GM18951 (cell line): ENCODE measurements at regions of chr6 and their contacts with region 1.

Region 1: DNA sequence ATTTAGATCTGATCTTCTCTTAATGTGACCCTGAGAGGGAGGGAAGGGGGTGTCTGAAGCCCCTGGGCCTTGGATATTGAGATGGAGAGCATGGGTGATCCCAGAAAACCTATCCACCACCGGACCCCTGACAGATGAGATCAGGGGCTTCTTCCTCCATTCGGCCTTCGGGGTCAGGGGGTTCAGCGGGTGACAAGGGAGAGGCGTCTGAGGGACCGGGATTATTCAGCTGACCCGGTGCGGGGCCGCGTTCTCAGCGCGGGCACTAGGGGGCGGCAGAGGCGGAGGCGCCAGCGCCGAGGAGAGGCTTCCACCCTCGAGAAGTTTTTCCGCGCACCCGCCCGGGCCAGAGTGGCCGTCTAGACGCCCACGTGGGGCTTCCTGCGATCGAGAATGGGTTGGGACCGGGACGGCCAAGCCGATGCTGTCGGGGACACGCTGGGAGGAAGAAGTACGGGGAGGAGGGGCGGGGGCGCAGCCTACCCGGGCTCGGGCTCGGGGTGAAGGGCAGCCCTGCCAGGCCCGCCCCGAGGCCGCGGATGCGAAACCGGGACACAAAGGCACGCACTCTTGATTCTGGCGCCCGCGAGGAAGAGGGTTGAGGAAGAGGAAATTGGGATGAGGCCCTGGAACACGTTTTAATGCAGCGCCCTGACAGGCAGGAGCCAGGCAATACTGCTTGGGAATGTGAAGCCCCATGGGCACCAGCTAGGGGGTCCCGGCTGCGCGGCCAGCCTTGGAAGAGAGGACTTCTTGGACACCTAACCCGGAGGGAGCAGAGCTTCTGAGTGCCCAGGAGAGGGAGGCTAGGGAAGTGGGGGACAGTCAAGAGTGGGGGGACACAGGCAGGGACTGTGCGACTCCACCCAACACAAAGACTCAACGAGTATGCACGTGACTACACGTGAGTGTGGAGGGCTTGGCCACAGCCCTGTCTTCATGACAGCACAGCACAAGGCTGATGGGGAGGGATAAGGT is 30.6 kb downstream of the COL11A2 start:
- POLR2A ChIP-seq: no peak

Region 2: GRCh38 chr6:33249732-33250625 is 88.3 kb after region 1 on chr6:
- in situ Hi-C with region 1: loop called (anchors 5 kb)
- POLR2A ChIP-seq: no peak